PC-9 (cell line): ENCODE measurements at regions of chr2 and their contacts with region 1.

Region 1: GRCh38 chr2:208062113-208062512 is 36.8 kb upstream of the PLEKHM3 start:
- DNase-seq: peak in 1 of 2 experiments; percentile 35
- H3K4me3 ChIP-seq: no peak overlapping the region
- H3K27ac ChIP-seq: no peak overlapping the region
- H3K4me1 ChIP-seq: peaks cover 8% of the 10 kb centered on the region
- H3K27me3 ChIP-seq: no peaks in the 10 kb centered on the region
- CTCF ChIP-seq: peak; percentile 63

Region 2: DNA sequence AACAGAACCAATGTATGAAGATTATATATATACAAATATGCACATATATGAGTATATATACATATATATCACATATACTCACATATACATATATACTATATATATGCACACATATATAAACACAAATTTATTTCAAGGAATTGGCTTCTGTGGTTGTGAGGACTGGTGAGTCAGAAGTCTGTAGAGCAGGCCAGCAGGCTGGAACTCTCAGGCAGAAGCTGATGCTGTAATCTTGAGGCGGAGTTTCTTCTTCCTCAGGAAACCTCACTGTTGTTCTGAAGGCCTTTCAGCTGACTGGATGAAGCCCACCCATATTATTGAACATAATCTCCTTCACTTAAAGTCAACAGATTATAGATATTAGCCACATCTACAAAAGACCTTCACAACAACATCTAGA is 676.2 kb before region 1 on chr2:
- CTCF ChIA-PET with region 1: no interaction called
- POLR2A ChIA-PET with region 1: no interaction called
- intact Hi-C with region 1: no loop called
- DNase-seq: no peak
- H3K4me3 ChIP-seq: no peak overlapping the region
- H3K27ac ChIP-seq: no peak overlapping the region
- H3K4me1 ChIP-seq: no peaks in the 10 kb centered on the region
- H3K27me3 ChIP-seq: no peaks in the 10 kb centered on the region
- CTCF ChIP-seq: no peak

Region 3: GRCh38 chr2:208148803-208149202 is 86.7 kb after region 1 on chr2:
- CTCF ChIA-PET with region 1: no interaction called
- POLR2A ChIA-PET with region 1: no interaction called
- intact Hi-C with region 1: no loop called
- DNase-seq: no peak
- H3K4me3 ChIP-seq: no peak overlapping the region
- H3K27ac ChIP-seq: no peak overlapping the region
- H3K4me1 ChIP-seq: no peaks in the 10 kb centered on the region
- H3K27me3 ChIP-seq: no peaks in the 10 kb centered on the region
- CTCF ChIP-seq: no peak; the same call in 1 of the 2 replicates

Region 4: GRCh38 chr2:208311954-208312353 is 249.8 kb after region 1 on chr2:
- CTCF ChIA-PET with region 1: interaction called, 12 read pairs
- POLR2A ChIA-PET with region 1: no interaction called
- intact Hi-C with region 1: no loop called
- DNase-seq: no peak
- H3K4me3 ChIP-seq: no peak overlapping the region
- H3K27ac ChIP-seq: no peak overlapping the region
- H3K4me1 ChIP-seq: no peaks in the 10 kb centered on the region
- H3K27me3 ChIP-seq: no peaks in the 10 kb centered on the region
- CTCF ChIP-seq: no peak

Region 5: DNA sequence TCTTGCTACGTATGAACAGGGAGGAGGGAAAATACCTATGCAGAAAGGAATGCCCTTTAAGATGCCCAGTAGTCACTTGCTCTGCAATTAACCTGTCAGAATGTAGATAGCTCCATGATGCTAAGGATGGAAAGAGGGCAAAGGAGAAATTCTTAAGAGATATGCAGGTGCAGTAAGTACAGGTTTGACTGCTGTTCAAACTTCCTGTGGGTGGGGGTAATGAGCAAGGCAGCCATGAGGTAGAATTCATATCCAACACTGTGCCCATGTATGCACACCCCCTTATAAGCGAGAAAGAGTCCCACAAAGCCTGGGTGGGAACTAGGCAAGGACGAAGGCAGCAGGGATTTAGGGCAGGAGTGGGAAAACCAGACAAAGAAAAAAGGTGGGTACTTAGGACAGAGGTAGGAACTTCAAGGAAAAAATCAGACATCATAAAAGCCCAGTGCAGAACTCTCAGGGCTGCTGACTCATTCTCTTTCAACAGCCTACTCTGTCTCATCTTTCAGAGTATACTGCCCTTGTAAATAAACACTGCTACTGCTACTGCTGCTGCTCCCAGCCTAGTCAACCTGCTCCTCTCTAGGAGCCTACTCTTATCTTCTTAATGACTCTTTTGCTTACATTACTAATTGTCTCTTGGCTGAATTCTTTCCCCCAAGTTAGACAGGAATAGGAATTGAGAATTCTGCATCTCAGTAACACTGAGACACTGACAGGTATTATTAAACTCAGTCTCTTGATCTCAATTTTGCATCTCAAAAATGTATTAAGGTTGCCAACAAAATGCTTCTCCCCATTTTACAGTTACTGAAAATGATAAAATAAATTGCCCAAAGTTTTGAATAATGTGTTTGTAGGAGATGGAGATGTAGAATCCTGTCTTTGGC is 533.5 kb after region 1 on chr2:
- CTCF ChIA-PET with region 1: no interaction called
- POLR2A ChIA-PET with region 1: no interaction called
- intact Hi-C with region 1: no loop called
- DNase-seq: peak; percentile 10 to 77
- H3K4me3 ChIP-seq: peak overlapping the region; percentile 35; the same call in 1 of the 2 replicates
- H3K27ac ChIP-seq: peak overlapping the region; percentile 68
- H3K4me1 ChIP-seq: peaks cover 22% of the 10 kb centered on the region
- H3K27me3 ChIP-seq: no peaks in the 10 kb centered on the region
- CTCF ChIP-seq: no peak; the same call in 1 of the 2 replicates